K562 (cell line): ENCODE measurements at regions of chr11 and their contacts with region 1.

Region 1: GRCh38 chr11:96389720-96390487 is at the starts of genes CCDC82 and JRKL:
- DNase-seq: peak; percentile 97 to 98 (median 98)
- ATAC-seq: peak; percentile 97
- H3K4me3 ChIP-seq: peak within 1 kb of the TSS; percentile 67
- H3K27ac ChIP-seq: peak within 1 kb of the TSS; percentile 87
- H3K4me1 ChIP-seq: peaks cover 0 to 4% of the 10 kb centered on the region in 2 experiments; a peak in 1 of 5 replicates
- H3K27me3 ChIP-seq: no peaks in the 10 kb centered on the region
- CTCF ChIP-seq: peak in 1 of 3 experiments; percentile 15; a peak in 1 of 6 replicates
- EP300 ChIP-seq: no peak; the same call in 1 of the 2 replicates
- POLR2A ChIP-seq: peak; percentile 91
- RAD21 ChIP-seq: 0 out of 4 replicates have a peak, but pooled peaks of 1 of the 2 experiments have one; percentile 12
- polyA plus RNA-seq, gene CCDC82: 23.7 to 24.7 TPM
- polyA plus RNA-seq, gene JRKL: 4.8 to 6.8 TPM

Region 2: GRCh38 chr11:95835768-95836488 is 554.0 kb before region 1 on chr11:
- CTCF ChIA-PET with region 1: interaction called, 6 read pairs
- POLR2A ChIA-PET with region 1: interaction called, 4 read pairs
- in situ Hi-C with region 1: no loop called
- intact Hi-C with region 1: loop called (anchors 2 kb)
- DNase-seq: peak; percentile 49 to 80 (median 64)
- ATAC-seq: peak; percentile 98
- H3K4me3 ChIP-seq: no peak overlapping the region
- H3K27ac ChIP-seq: no peak overlapping the region
- H3K4me1 ChIP-seq: no peaks in the 10 kb centered on the region
- H3K27me3 ChIP-seq: no peaks in the 10 kb centered on the region
- CTCF ChIP-seq: peak; percentile 81 to 88 (median 88)
- EP300 ChIP-seq: no peak
- POLR2A ChIP-seq: no peak
- RAD21 ChIP-seq: peak; percentile 75 to 85

Region 3: DNA sequence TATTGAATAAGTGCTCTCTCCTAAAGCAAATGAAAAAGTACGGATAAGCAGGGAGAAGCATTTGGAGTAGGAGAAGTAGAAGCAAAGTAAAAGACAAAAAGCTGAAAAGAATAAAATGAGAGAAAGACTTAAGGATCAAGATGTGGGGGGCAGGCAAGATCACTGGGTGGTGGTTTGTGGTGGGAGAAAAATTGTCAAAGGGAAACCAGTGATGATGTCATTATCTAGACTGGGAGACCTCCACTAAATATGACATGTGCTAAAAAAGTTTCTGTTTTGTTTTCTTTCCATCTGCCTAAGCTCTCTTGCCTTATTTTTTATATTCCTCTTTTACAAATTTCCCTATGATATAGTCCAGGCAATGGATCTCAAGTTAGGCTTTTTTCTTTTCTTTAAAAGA is 32.1 kb before region 1 on chr11:
- CTCF ChIA-PET with region 1: no interaction called
- POLR2A ChIA-PET with region 1: no interaction called
- in situ Hi-C with region 1: no loop called
- intact Hi-C with region 1: no loop called
- DNase-seq: no peak
- ATAC-seq: no peak
- H3K4me3 ChIP-seq: no peak overlapping the region
- H3K27ac ChIP-seq: no peak overlapping the region
- H3K4me1 ChIP-seq: peaks cover 0 to 10% of the 10 kb centered on the region in 2 experiments; a peak in 2 of 5 replicates
- H3K27me3 ChIP-seq: no peaks in the 10 kb centered on the region
- CTCF ChIP-seq: no peak
- EP300 ChIP-seq: no peak
- POLR2A ChIP-seq: no peak
- RAD21 ChIP-seq: no peak